Mammary epithelial cell (primary cell): ENCODE measurements at regions of chr6 and their contacts with region 1.

Region 1: GRCh38 chr6:108260809-108261569 is at the start of gene SNX3:
- DNase-seq: peak; percentile 98
- H3K4me3 ChIP-seq: peak within 1 kb of the TSS; percentile 84 to 98 (median 93)
- H3K27ac ChIP-seq: peak within 1 kb of the TSS; percentile 75
- H3K4me1 ChIP-seq: peaks cover 12% of the 10 kb centered on the region
- H3K27me3 ChIP-seq: no peaks in the 10 kb centered on the region
- CTCF ChIP-seq: peak in 1 of 2 donors; percentile 14
- total RNA-seq, gene SNX3: 143 to 147 TPM

Region 2: DNA sequence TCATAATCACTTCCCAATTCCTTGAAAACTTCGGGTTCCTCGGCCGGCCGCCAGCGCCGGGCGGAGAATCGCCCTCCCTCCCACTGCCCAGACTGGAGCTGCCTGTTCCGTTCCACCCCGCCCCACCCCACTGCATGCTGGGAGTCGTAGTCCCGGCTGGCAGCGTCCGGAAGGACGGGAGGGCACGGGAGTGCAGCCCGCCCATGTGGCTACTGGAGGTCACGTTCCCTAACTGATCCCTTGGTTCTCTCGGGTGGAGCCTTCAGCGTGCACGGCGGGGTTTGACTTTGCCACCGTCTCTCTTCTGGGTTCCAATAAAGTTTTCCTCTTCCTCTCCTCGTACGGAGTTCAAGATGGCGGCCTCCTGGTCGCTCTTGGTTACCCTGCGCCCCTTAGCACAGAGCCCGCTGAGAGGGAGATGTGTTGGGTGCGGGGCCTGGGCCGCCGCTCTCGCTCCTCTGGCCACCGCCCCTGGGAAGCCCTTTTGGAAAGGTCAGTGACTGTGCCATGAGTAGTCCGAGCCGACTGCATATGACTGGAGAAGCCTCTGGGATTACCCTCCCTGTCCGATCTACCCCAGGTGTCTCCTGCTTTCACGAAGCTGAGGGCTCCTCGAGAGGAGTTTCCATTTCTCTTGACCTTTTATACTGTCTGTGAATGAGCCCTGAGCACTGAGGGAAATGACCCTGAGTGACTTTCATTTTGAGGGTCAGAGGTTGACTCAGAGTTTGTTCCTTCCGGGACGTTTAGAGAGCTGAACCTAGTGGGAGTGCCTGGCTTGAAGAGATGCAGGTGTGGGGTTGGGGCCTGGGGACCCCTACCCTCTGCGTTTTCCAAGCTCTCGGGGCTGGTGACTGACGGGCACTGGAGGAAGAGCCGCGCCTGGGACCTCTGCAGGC is 34.0 kb after region 1 on chr6 and contains the start of gene AFG1L:
- CTCF ChIA-PET with region 1: interaction called, 3 read pairs
- dilution Hi-C with region 1: no loop called
- in situ Hi-C with region 1: no loop called
- intact Hi-C with region 1: loop called (anchors 1 kb)
- DNase-seq: peak; percentile 91
- H3K4me3 ChIP-seq: peak within 1 kb of the TSS; percentile 62 to 97 (median 92)
- H3K27ac ChIP-seq: peak within 1 kb of the TSS; percentile 89
- H3K4me1 ChIP-seq: peaks cover 5% of the 10 kb centered on the region
- H3K27me3 ChIP-seq: no peaks in the 10 kb centered on the region
- CTCF ChIP-seq: no peak
- total RNA-seq, gene AFG1L: 5.0 to 8.7 TPM

Region 3: DNA sequence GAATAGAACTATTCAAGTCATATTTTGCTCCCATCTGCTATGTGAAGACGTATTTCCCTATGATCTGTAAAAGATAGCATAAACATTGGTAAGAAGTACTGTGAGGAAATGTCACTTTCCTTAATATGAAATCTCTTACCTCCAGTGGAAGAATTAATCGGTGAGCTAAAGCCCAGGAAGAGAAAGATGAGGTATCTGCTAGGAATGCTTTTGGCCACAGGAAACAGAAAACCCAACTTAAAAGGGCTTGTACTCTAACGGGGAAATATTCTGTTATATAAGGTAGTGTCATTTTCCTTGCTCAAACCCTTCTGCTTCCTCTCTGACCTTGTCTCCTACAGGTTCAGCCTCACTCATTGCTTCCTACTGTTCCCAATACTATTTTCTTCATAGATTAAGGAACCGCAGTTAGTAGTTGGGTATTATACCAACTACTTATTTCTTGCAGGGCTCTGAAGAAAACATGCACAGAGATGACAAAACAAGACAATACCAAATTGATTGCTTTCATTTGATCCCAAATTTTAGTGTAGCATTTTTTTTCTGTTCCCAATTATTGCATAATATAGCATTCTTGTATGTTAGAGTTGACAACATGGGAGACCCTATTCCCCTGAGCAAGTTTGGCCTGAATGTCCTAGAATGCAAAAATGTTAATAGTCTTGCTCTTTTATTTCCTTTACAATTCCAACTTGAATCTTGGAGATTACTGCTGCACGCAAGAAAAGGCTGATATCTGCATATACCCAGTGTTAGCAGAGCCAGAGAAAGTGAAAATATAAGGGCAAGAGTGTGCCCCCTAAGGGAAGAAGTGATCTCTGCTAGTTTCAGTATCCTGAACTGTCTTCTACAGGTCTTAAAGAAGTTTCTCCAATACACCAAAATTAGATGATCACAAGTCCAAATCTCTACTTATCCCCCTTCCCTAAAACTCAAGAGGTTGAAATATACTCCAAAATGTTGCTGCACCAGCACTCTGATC is 99.2 kb after region 1 on chr6:
- CTCF ChIA-PET with region 1: no interaction called
- dilution Hi-C with region 1: no loop called
- in situ Hi-C with region 1: no loop called
- intact Hi-C with region 1: loop called (anchors 5 kb)
- DNase-seq: peak; percentile 4
- H3K4me3 ChIP-seq: no peak overlapping the region
- H3K27ac ChIP-seq: no peak overlapping the region
- H3K4me1 ChIP-seq: peaks cover 4% of the 10 kb centered on the region
- H3K27me3 ChIP-seq: no peaks in the 10 kb centered on the region
- CTCF ChIP-seq: peak in 1 of 2 donors; percentile 4

Region 4: DNA sequence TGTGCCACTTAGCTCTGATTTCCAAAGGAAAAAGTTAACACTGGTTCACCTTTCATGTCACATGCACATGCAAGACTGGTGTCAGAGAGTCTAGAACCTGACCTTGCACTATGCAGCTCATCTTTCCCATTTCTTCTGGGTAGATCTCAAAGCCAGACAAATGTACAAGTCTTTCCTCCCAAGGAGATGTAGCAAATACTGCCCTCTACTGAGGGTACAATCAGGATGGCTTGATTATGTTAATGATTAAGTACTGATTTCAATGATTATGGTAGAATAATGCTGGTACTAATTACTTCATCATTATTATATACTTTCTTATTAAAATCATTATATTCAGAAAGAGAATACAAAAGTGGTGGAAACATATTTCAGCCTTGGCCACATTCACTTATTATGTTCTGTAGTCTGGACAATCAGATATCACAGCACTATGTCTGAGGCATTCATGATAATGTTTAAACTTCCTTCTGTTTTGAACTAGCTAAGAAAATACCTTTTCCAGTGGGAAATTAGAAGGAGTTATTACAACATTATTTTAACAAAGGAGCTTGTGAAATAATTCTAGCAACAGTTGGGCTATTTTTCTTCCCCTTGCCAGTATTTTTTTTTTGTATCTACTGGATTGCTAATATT is 231.3 kb after region 1 on chr6:
- CTCF ChIA-PET with region 1: interaction called, 3 read pairs
- dilution Hi-C with region 1: no loop called
- in situ Hi-C with region 1: loop called in 1 of 2 experiments (anchors 25 kb)
- intact Hi-C with region 1: loop called (anchors 1 kb)
- DNase-seq: peak; percentile 37
- H3K4me3 ChIP-seq: no peak overlapping the region
- H3K27ac ChIP-seq: no peak overlapping the region
- H3K4me1 ChIP-seq: no peaks in the 10 kb centered on the region
- H3K27me3 ChIP-seq: no peaks in the 10 kb centered on the region
- CTCF ChIP-seq: peak; percentile 73 to 76